Activated CD4-positive, alpha-beta memory T cell treated with anti-CD3 and anti-CD28 coated beads, Interleukin-2, amount 10 ng/mL, durations not matched to agents 7 days and 5 days (primary cell): ENCODE measurements at regions of chr10 and their contacts with region 1.

Region 1: DNA sequence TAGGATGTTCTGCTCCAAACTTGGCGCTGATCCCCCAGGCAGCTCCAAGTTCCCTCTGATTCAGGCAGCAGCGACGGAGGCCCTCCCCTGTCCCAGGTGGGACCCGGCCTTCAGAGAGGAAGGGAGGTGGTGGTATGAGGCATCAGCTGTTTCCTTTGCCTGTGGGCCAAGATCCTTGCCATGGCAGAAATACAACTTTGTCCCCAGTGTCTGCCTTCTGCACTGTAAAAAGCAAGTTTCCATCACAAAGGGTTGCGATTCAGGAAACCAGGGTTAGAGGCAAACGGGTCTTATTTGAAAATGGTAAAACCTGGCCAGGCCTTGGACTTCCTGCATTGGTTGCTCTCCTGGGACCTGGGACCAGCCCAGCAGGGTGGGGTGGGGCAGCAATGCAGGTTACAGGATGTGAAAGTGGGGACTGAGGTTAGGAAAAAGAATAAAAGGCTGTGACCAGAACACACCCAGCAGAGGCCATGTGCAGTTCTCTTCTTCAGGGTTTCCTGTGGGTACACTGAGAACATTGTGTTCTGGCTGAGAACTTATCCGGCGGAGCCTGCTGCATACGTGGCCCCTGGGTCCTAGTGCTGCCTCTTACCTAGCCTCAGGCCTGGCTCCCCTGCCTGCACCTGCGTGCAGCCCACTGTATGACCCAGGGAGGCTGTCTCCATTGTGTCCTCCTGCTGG is 25.1 kb upstream of the DDIT4 start:
- DNase-seq: peak; percentile 86
- H3K4me3 Mint-ChIP-seq: peak overlapping the region; percentile 73
- H3K27ac Mint-ChIP-seq: peak overlapping the region; percentile 96
- H3K4me1 Mint-ChIP-seq: peaks cover 78% of the 10 kb centered on the region
- H3K27me3 Mint-ChIP-seq: no peaks in the 10 kb centered on the region

Region 2: GRCh38 chr10:72215652-72216549 is 32.7 kb before region 1 on chr10 and contains the starts of genes ANAPC16 and ASCC1:
- CTCF ChIA-PET with region 1: interaction called, 7 read pairs
- POLR2A ChIA-PET with region 1: interaction called, 28 read pairs
- DNase-seq: peak; percentile 94
- H3K4me3 Mint-ChIP-seq: peak within 1 kb of the TSS; percentile 98
- H3K27ac Mint-ChIP-seq: peak within 1 kb of the TSS; percentile 99
- H3K4me1 Mint-ChIP-seq: peaks cover 61% of the 10 kb centered on the region
- H3K27me3 Mint-ChIP-seq: no peaks in the 10 kb centered on the region
- total RNA-seq, gene ANAPC16: 94.2 to 101 TPM
- total RNA-seq, gene ASCC1: 35.5 to 36.2 TPM

Region 3: DNA sequence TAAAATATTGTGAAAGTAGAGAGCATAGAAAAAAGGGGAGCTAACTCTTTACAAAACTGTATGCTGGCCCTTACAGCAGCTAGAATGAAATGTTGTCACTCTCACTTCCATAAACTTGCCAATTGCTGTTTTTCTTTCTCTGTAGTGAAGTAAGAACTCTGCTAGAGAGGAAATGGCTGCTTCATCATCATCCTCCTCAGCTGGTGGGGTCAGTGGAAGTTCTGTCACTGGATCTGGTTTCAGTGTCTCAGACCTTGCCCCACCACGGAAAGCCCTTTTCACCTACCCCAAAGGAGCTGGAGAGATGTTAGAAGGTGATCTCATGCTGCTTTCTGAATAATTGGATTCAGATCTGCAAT is 24.9 kb before region 1 on chr10:
- CTCF ChIA-PET with region 1: interaction called, 11 read pairs
- POLR2A ChIA-PET with region 1: interaction called, 8 read pairs
- DNase-seq: no peak
- H3K4me3 Mint-ChIP-seq: no peak overlapping the region
- H3K27ac Mint-ChIP-seq: peak overlapping the region; percentile 58
- H3K4me1 Mint-ChIP-seq: peaks cover 52% of the 10 kb centered on the region
- H3K27me3 Mint-ChIP-seq: no peaks in the 10 kb centered on the region

Region 4: DNA sequence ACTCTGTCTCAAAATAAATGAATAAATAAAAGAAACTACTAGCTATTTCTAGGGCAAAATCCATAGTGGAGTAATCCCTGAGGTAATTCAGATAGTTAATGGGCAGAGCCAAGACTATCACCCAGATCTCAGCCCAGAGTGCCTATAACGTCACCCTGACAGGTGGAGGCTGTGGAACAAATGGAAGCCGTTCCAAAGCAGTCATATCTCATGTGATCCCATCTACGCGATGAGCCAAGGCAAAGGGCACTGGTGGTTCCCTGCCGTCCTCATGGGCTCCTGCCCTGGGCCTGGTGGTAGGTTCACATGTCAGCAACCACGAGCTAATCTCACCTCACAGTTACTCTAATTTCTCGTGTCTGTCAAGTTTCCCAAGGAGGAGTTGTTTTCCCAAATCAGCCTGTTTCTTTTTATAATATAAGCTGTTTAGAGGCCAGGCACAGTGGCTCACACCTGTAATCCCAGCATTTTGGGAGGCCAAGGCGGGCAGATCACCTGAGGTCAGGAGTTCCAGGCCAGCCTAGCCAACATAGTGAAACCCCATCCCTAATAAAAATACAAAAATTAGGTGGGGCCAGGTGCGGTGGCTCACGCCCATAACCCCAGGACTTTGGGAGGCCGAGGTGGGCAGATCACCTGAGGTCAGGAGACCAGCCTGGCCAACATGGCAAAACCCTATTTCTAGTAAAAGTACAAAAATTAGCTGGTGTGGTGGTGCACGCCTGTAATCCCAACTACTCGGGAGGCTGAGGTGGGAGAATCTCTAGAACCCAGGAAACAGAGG is 10.0 kb before region 1 on chr10:
- CTCF ChIA-PET with region 1: interaction called, 5 read pairs
- POLR2A ChIA-PET with region 1: interaction called, 12 read pairs
- DNase-seq: no peak
- H3K4me3 Mint-ChIP-seq: no peak overlapping the region
- H3K27ac Mint-ChIP-seq: no peak overlapping the region
- H3K4me1 Mint-ChIP-seq: peaks cover 22% of the 10 kb centered on the region
- H3K27me3 Mint-ChIP-seq: no peaks in the 10 kb centered on the region

Region 5: DNA sequence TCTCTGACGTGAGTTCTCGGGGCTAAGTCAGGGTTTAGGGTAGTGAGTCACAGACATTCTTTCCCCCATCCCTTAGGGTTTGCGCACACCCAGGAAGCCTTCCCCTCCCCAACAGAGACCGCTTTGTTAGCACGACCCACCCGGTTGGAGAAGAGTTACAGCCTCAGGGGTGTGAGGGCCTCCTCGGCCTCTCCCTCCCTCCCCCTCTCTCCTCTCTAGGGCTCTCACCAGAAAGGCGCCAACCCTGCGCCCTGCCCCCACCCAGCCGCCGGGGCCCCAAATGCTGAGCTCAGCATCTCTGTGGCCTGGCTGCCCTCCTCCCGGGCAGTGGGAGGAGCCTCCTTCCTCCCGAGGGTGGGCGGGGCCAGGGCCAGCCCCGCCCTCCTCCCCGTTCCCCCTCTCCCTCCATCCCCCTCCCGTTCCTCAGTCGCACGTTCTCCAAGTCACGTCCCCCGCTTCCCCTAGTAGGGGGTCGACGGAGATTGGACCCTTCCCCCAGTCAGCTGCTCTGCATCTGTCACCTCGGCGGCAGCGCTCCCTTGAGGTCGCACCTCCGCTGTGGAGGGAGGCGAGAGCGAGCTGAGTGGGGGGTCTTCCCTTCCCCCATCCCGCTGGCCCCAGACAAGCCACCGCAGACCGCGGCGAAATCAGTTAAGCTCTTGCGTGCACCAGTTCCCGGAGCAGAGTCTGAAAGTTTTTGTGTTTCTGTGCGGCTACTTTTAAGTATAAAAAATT is 12.1 kb after region 1 on chr10:
- CTCF ChIA-PET with region 1: interaction called, 37 read pairs
- POLR2A ChIA-PET with region 1: interaction called, 90 read pairs
- DNase-seq: peak; percentile 95
- H3K4me3 Mint-ChIP-seq: peak overlapping the region; percentile 79
- H3K27ac Mint-ChIP-seq: peak overlapping the region; percentile 98
- H3K4me1 Mint-ChIP-seq: peaks cover 65% of the 10 kb centered on the region
- H3K27me3 Mint-ChIP-seq: no peaks in the 10 kb centered on the region

Region 6: DNA sequence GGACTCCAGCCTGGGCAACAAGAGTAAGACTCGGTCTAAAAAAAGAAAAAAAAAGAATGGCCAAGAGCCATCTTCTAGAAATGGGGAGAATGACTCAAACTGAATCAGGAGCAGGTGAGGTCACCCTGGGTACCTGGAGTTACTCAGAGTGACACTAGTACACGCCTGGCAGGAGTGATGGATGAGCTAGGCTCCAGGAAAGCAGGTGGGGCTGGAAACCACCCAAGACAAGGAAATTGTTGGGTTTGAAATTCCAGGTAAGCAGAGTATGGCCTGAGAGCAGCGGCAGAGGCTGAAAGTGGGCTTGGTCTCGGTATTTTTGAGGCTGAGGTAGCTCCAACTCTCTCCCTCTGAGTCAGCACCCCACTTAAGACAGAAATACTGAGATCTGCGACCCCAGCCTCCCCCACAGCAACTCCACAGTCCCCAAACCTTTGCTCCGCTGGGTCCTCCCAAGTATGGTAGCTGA is 43.6 kb after region 1 on chr10:
- CTCF ChIA-PET with region 1: interaction called, 9 read pairs
- POLR2A ChIA-PET with region 1: interaction called, 47 read pairs
- DNase-seq: peak; percentile 60
- H3K4me3 Mint-ChIP-seq: peak overlapping the region; percentile 31
- H3K27ac Mint-ChIP-seq: peak overlapping the region; percentile 90
- H3K4me1 Mint-ChIP-seq: peaks cover 67% of the 10 kb centered on the region
- H3K27me3 Mint-ChIP-seq: no peaks in the 10 kb centered on the region

Region 7: GRCh38 chr10:72386916-72387586 is 138.4 kb after region 1 on chr10:
- CTCF ChIA-PET with region 1: no interaction called
- POLR2A ChIA-PET with region 1: no interaction called
- DNase-seq: no peak
- H3K4me3 Mint-ChIP-seq: no peak overlapping the region
- H3K27ac Mint-ChIP-seq: no peak overlapping the region
- H3K4me1 Mint-ChIP-seq: no peaks in the 10 kb centered on the region
- H3K27me3 Mint-ChIP-seq: no peaks in the 10 kb centered on the region